Colonic mucosa (tissue), 4 donors: ENCODE measurements at regions of chr9 and their contacts with region 1.

Region 1: DNA sequence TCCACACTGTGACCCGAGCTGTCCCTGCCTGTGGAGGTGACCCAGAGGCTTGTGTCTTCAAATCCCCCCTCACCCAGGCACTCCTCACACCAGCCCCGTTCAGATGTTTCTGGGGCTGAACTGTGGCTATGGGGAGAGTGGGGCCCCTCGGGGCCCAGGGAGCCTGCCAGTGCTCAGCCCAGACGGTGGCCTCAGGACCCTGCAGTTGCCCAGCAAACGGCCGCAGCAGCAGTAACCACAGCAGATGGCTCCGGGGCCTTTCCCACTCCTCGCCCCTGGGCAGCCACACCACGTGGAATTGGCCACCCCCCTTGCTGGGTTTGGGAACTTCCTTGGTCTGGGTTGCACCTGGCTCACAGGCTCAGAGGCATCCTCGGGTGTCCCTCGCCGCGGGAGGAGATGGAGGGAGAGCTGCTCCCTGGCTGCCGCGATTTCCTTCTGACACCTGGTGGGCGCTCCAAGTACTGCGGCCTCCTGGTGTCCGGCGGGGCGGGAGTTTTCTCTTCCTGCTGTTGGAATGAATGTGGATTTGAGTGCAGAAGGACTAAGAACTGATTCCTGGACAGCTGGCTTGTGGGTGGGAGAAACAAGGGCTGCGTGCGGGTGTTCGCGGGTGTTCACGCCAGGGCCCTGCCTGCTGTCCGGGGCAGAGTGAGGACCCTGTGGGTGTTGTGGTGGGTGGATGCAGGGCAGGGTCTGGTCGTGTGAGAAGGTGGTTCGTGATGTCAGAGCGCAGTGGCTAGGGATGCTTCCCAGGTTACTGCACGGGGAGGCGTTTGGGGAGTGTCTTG is 97.5 kb downstream of the COL5A1 start:
- DNase-seq: peak; percentile 67
- H3K4me3 ChIP-seq: no peak overlapping the region
- H3K27ac ChIP-seq: no peak overlapping the region
- H3K4me1 ChIP-seq: no peaks in the 10 kb centered on the region
- H3K27me3 ChIP-seq: no peaks in the 10 kb centered on the region
- CTCF ChIP-seq: peak; percentile 69

Region 2: DNA sequence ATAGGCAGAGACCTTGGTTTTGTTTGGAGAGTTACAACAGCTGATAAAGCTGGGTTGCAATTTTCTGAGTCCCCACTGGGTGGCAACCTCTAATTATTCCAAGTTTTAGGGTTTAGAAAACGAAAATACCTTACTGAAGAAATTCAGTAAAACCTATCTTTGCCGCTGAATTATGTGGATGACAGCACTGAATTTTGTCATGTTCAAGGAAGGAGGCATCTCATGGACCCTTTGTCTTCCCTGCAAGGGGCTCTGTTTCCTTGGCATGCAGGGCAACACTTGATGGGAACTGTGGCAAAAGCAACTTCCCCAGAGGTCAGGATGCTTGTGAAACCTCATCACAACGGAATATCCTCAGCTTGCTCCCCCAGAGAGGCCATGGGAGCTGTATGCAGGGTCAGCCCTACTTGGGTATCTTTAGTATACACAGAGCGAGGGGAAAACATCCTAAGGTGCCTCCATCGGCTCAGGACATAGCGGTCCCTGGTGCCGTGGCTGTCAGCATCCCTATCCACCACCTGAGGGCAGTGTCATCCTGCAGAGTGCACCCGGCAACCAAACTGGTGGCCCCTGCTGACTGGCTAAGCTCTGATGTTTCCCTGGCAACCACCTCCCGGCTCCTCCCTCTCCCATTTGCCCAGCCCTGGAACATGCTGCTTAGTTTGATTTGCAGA is 289.7 kb before region 1 on chr9:
- intact Hi-C with region 1: loop called (anchors 2 kb)
- DNase-seq: peak; percentile 83
- H3K4me3 ChIP-seq: no peak overlapping the region
- H3K27ac ChIP-seq: no peak overlapping the region
- H3K4me1 ChIP-seq: no peaks in the 10 kb centered on the region
- H3K27me3 ChIP-seq: no peaks in the 10 kb centered on the region
- CTCF ChIP-seq: peak; percentile 77

Region 3: DNA sequence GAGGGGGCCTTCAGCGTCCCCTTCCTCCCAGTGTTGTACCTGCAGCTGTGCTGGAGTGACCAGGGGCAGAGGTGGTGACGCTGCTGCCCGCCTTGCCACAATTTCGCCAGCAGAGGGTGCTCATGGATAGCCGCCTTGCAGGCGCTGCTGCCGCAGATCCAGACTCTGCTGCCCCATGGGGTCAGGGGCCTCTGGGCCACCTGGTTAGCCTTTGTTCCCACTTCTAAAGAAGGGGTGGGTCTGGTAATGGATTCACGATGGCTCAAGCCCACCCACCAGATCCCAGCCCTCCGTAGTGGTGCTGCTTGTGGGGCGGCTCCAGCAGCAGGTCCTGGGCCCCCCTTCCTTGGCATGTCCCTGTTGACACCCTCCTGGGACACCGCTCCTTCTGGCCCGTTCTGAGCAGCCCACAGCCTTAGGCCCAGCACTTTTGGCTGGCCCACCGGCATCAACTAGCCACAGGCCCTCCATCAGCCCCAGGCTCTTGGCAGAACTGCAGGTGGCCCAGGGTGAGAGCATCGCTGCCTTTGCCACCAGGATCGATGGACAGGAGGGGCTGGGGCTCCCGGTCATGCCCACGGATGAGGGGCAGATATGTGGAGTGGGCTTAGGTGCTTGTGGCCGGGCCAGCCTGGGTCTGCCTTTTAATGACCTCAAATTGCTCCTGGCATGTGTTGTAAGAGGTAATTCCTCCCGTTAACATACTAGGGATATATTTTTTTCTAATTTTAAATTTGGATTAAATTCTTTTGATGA is 40.3 kb before region 1 on chr9:
- intact Hi-C with region 1: loop called (anchors 2 kb)
- DNase-seq: peak; percentile 60
- H3K4me3 ChIP-seq: no peak overlapping the region
- H3K27ac ChIP-seq: no peak overlapping the region
- H3K4me1 ChIP-seq: no peaks in the 10 kb centered on the region
- H3K27me3 ChIP-seq: no peaks in the 10 kb centered on the region
- CTCF ChIP-seq: peak; percentile 85

Region 4: GRCh38 chr9:135009711-135010584 is 270.9 kb after region 1 on chr9:
- intact Hi-C with region 1: no loop called
- DNase-seq: no peak
- H3K4me3 ChIP-seq: no peak overlapping the region
- H3K27ac ChIP-seq: no peak overlapping the region
- H3K4me1 ChIP-seq: no peaks in the 10 kb centered on the region
- H3K27me3 ChIP-seq: no peaks in the 10 kb centered on the region
- CTCF ChIP-seq: no peak